K562 (cell line): ENCODE measurements at regions of chr16 and their contacts with region 1.

Region 1: DNA sequence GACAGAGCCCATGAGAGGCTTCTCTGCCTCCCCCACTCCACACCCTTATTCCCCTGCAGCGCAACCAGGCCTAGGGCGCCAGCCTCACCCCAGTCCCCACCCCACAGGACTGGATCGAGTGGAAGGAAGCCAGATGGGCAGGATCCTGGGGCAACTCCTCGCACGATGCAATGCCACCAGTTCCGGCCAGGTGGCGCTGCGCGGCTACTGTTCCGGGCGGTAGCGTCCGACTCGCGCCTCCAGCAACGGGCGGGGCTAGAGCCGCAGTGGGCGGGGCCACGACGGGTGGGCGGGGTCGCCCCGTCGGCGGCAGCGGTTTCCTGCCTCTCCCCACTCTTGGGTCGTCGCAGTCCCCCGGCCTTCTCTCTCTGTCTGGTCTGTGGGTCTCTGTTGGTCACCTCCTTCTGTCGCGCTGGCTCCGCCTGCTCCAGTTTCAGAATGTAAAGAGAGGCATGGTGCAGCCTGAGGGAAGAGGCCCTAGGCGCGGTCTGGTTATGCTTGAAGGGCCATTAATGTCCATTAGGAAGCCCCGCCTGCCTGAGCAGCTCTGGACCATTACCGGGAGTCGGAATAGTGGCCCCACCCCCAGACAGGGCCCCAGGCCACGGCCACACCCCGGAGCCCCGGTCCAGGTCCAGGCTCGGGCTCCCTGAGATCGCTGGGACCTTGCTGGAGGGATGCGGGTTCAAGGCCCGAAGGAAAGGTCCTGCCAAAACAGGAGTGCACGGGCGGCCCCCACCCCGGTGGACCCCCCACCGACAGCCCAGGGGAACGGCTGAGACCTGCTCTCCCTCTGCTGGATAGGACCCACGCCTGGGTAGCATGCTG is 3.4 kb upstream of the NHERF2 start:
- DNase-seq: peak; percentile 90 to 96 (median 92)
- ATAC-seq: peak; percentile 85
- H3K4me3 ChIP-seq: peak overlapping the region; percentile 41
- H3K27ac ChIP-seq: peak overlapping the region; percentile 76
- H3K4me1 ChIP-seq: peaks cover 21 to 79% of the 10 kb centered on the region in 2 experiments; a peak in 4 of 5 replicates
- H3K27me3 ChIP-seq: no peaks in the 10 kb centered on the region
- CTCF ChIP-seq: peak; percentile 93 to 97 (median 96)
- EP300 ChIP-seq: no peak
- POLR2A ChIP-seq: peak; percentile 69
- RAD21 ChIP-seq: peak; percentile 90 to 94

Region 2: DNA sequence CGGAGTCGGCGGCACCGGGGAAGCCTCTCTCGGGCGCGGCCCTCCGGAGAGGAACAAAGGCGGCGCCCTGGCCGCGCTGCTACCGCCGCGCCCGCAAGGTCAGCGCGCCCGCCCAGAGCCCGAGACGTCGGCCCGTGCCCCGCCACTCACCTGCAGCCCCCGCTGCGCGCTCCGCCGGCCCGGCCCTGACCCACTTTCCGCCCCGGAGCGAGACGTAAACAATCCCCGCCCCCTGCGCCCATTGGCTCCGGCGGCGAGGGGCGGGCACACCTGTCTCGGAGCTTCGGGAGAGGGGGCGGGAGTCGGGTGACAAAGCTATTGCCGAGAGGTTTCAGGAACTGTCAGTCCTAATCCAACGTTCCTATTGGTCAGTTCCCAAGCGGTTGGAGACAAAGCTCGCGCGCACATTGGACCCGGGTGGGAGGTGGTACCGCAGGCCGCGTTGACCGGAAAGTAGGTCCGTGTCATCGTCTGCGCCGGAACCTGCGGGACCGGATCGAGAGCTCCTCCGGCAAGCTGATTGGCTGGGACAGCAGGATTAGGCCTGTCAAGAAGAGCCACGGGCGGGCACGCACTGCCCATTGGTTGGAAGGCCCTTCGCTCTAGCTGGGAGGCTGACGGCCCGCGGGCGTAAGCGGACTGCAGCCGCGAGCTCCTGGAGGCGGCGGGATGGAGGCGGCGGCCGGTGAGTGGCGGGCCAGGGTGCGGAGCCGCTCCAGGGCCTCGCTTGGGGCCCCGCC is 240.8 kb before region 1 on chr16 and contains the starts of genes NUBP2 and SPSB3:
- CTCF ChIA-PET with region 1: no interaction called
- POLR2A ChIA-PET with region 1: no interaction called
- in situ Hi-C with region 1: no loop called
- intact Hi-C with region 1: no loop called
- DNase-seq: peak; percentile 94 to 100 (median 96)
- ATAC-seq: peak; percentile 93
- H3K4me3 ChIP-seq: peak within 1 kb of the TSS; percentile 99
- H3K27ac ChIP-seq: peak within 1 kb of the TSS; percentile 78
- H3K4me1 ChIP-seq: peaks cover 4 to 84% of the 10 kb centered on the region in 2 experiments; a peak in 3 of 5 replicates
- H3K27me3 ChIP-seq: no peaks in the 10 kb centered on the region
- CTCF ChIP-seq: no peak
- EP300 ChIP-seq: no peak
- POLR2A ChIP-seq: peak; percentile 54
- RAD21 ChIP-seq: no peak
- polyA plus RNA-seq, gene NUBP2: 1.8 to 7.7 TPM
- polyA plus RNA-seq, gene SPSB3: 0.39 to 1.3 TPM

Region 3: GRCh38 chr16:2267913-2268666 is 244.8 kb after region 1 on chr16 and contains the start of gene RNPS1:
- CTCF ChIA-PET with region 1: no interaction called
- POLR2A ChIA-PET with region 1: no interaction called
- in situ Hi-C with region 1: no loop called
- intact Hi-C with region 1: loop called (anchors 5 kb)
- DNase-seq: peak; percentile 96 to 99 (median 98)
- ATAC-seq: peak; percentile 96
- H3K4me3 ChIP-seq: peak within 1 kb of the TSS; percentile 79
- H3K27ac ChIP-seq: peak within 1 kb of the TSS; percentile 98
- H3K4me1 ChIP-seq: peaks cover 13 to 59% of the 10 kb centered on the region in 2 experiments; a peak in 4 of 5 replicates
- H3K27me3 ChIP-seq: no peaks in the 10 kb centered on the region
- CTCF ChIP-seq: no peak
- EP300 ChIP-seq: peak; percentile 46; the same call in 1 of the 2 replicates
- POLR2A ChIP-seq: peak; percentile 97
- RAD21 ChIP-seq: no peak
- polyA plus RNA-seq, gene RNPS1: 44.9 to 50.6 TPM